ENCODE measurements at regions of chr6 and their contacts with region 1.

Region 1: DNA sequence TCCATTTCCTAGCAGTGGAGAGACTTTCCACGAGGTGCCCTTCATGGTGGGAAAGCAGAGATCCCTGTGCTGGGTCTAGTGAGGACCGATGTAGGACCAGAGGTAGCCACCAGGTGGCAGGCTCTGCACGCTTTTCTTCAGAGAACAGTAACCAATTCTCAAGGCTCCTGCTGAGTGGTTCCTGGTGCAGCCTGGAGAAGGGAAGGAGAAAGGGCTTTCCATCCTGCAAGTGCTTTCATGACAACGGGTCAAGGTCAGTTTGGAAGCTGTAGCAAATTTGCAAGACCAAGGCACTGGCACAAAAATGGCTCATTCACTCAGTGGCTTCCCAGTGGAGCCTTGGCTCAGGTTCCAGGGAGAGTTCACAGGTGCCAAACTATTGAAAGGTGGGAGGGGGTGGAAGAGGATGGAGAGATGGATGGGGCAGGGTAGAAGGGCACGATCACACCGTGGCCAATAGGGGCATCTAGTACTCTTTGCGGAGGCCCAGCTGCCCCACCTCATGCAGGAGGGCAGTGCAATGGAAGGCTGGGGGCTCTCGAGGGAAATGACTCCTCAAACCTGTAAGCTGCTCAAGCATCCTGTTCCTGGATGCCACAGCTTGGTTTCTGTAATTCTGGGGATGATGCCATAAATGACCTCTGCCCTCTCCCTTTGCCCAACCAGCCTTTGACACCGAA is 25.5 kb upstream of the KCNK16 start:
- DNase-seq: peak; percentile 62
- H3K4me3 Mint-ChIP-seq: no peak overlapping the region
- H3K27ac Mint-ChIP-seq: no peak overlapping the region
- H3K4me1 Mint-ChIP-seq: no peaks in the 10 kb centered on the region
- H3K27me3 Mint-ChIP-seq: no peaks in the 10 kb centered on the region
- CTCF ChIP-seq: peak; percentile 91

Region 2: GRCh38 chr6:39361657-39362486 is 13.8 kb after region 1 on chr6:
- CTCF ChIA-PET with region 1: interaction called, 58 read pairs
- POLR2A ChIA-PET with region 1: no interaction called
- intact Hi-C with region 1: no loop called
- DNase-seq: peak; percentile 70
- H3K4me3 Mint-ChIP-seq: no peak overlapping the region
- H3K27ac Mint-ChIP-seq: no peak overlapping the region
- H3K4me1 Mint-ChIP-seq: peaks cover 14% of the 10 kb centered on the region
- H3K27me3 Mint-ChIP-seq: no peaks in the 10 kb centered on the region
- CTCF ChIP-seq: peak; percentile 78

Measured in MCF 10A (cell line).